Panc1 (cell line): ENCODE measurements at regions of chr20 and their contacts with region 1.

Region 1: DNA sequence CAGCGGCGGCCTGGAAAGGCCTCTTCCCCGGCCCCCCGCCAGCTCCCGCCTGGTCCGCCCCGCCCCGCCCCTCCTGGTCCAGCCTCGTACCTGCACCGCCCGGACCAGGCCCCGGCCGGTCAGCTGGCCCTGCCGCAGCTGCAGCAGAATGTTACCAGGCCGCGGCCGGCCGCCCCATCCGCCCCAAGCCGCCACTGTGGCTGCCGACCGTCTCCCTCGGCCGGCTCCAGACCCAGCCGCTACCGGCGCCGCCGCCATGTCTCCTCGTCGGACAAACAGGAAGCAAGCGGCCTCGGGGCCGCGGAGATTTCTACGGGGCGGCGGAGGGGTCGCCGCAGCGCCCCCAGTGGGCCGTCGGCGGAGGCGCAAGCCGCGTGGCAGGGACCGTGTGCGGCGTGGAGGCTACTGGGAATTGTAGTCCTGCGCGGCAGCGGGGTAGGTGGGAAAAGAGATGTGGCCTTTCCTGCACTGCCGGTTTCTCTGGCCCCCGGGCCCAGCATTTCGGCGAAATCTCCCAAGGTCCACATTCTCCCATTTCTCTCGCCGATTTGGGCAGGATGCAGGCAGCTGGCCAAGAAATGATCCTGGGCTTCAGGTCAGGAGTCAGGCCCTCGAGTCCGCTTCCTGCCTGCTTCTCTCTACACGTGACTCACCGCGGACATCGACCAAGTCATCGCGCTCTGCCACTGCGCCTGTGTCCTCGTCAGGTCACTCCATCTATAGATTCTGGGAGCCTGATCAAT is at the start of gene TRPC4AP:
- DNase-seq: peak; percentile 75
- ATAC-seq: peak; percentile 98
- H3K4me3 ChIP-seq: peak within 1 kb of the TSS; percentile 78 to 85
- H3K27ac ChIP-seq: peak within 1 kb of the TSS; percentile 89
- H3K4me1 ChIP-seq: peaks cover 14% of the 10 kb centered on the region
- H3K27me3 ChIP-seq: no peaks in the 10 kb centered on the region
- CTCF ChIP-seq: peak; percentile 99
- total RNA-seq, gene TRPC4AP: 48.4 TPM

Region 2: GRCh38 chr20:34876162-34877001 is 216.3 kb before region 1 on chr20 and contains the start of gene ACSS2:
- CTCF ChIA-PET with region 1: no interaction called
- POLR2A ChIA-PET with region 1: no interaction called
- in situ Hi-C with region 1: no loop called
- intact Hi-C with region 1: loop called (anchors 10 kb)
- DNase-seq: peak; percentile 95
- ATAC-seq: peak; percentile 90
- H3K4me3 ChIP-seq: peak within 1 kb of the TSS; percentile 71 to 91
- H3K27ac ChIP-seq: peak within 1 kb of the TSS; percentile 67
- H3K4me1 ChIP-seq: peaks cover 12% of the 10 kb centered on the region
- H3K27me3 ChIP-seq: no peaks in the 10 kb centered on the region
- CTCF ChIP-seq: no peak
- total RNA-seq, gene ACSS2: 25.4 TPM

Region 3: GRCh38 chr20:34896086-34896621 is 196.5 kb before region 1 on chr20:
- CTCF ChIA-PET with region 1: no interaction called
- POLR2A ChIA-PET with region 1: no interaction called
- in situ Hi-C with region 1: no loop called
- intact Hi-C with region 1: no loop called
- DNase-seq: no peak
- ATAC-seq: no peak
- H3K4me3 ChIP-seq: no peak overlapping the region
- H3K27ac ChIP-seq: no peak overlapping the region
- H3K4me1 ChIP-seq: no peaks in the 10 kb centered on the region
- H3K27me3 ChIP-seq: no peaks in the 10 kb centered on the region
- CTCF ChIP-seq: no peak

Region 4: DNA sequence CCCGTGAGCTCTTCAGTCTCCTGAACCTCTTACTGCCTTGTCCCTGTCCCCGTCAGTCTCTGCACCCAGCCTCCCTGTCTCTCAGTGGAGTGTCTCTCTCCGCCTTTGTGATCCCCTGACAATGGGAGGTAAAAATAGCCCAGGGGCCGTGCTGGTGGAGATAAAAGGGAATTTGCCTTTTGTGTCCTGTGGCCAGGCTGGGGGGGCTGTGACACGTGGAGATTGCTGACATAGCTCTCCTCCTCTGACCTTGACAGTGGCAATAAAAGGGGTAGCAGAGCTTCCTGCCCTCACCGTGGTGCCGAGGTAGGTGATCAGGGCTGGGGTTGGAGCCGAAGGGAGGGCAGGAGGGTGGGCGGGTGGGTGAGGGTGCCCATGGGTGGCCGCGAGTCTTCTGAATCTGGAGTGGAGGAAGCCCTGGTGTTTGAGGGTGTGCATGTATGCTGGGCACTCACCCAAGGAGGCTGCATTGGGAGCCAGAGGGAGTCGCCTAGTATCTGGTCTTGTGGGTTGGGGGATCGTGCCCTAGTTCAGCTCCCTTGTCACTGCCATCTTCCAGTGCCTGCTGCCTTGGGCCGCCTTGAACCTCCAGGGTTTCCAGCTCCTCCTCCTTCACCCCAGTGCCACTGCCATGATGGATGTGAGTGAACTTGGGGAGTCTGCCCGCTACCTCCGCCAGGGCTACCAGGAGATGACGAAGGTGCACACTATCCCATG is 115.2 kb before region 1 on chr20:
- CTCF ChIA-PET with region 1: no interaction called
- POLR2A ChIA-PET with region 1: no interaction called
- in situ Hi-C with region 1: no loop called
- intact Hi-C with region 1: no loop called
- DNase-seq: no peak
- ATAC-seq: no peak
- H3K4me3 ChIP-seq: no peak overlapping the region
- H3K27ac ChIP-seq: no peak overlapping the region
- H3K4me1 ChIP-seq: no peaks in the 10 kb centered on the region
- H3K27me3 ChIP-seq: no peaks in the 10 kb centered on the region
- CTCF ChIP-seq: no peak

Region 5: GRCh38 chr20:35120012-35120701 is 27.5 kb after region 1 on chr20:
- CTCF ChIA-PET with region 1: interaction called, 3 read pairs
- POLR2A ChIA-PET with region 1: interaction called, 10 read pairs
- in situ Hi-C with region 1: no loop called
- intact Hi-C with region 1: no loop called
- DNase-seq: no peak
- ATAC-seq: no peak
- H3K4me3 ChIP-seq: no peak overlapping the region
- H3K27ac ChIP-seq: no peak overlapping the region
- H3K4me1 ChIP-seq: no peaks in the 10 kb centered on the region
- H3K27me3 ChIP-seq: no peaks in the 10 kb centered on the region
- CTCF ChIP-seq: no peak

Region 6: DNA sequence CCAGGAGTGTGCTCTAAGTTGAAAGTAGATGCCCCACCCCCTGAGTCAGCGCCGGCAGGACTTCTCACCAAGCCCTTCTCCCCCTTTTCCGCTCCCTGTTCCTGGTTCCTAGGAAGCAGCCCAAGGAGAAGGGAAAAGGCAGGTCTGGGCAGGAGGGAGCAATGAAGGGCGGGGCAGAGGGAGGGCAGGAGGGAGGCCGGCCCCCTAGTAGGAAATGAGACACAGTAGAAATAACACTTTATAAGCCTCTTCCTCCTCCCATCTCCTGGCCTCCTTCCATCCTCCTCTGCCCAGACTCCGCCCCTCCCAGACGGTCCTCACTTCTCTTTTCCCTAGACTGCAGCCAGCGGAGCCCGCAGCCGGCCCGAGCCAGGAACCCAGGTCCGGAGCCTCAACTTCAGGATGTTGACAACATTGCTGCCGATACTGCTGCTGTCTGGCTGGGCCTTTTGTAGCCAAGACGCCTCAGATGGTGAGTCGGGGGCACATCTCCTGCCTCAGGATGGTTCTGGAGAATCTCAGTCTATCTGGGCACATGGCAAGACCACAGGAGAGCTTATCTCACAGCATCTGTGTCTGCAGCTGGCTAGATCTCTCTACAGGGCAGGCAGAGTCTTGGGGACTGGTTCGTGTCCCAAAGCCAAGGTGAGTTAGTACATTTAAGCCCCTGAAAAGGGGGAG is 79.2 kb after region 1 on chr20 and contains the start of gene PROCR:
- CTCF ChIA-PET with region 1: no interaction called
- POLR2A ChIA-PET with region 1: interaction called, 10 read pairs
- in situ Hi-C with region 1: no loop called
- intact Hi-C with region 1: no loop called
- DNase-seq: peak; percentile 94
- ATAC-seq: peak; percentile 92
- H3K4me3 ChIP-seq: peak within 1 kb of the TSS; percentile 49 to 96
- H3K27ac ChIP-seq: peak within 1 kb of the TSS; percentile 84
- H3K4me1 ChIP-seq: peaks cover 16% of the 10 kb centered on the region
- H3K27me3 ChIP-seq: no peaks in the 10 kb centered on the region
- CTCF ChIP-seq: no peak
- total RNA-seq, gene PROCR: 38.0 TPM